H1 (cell line): ENCODE measurements at regions of chr11 and their contacts with region 1.

Region 1: DNA sequence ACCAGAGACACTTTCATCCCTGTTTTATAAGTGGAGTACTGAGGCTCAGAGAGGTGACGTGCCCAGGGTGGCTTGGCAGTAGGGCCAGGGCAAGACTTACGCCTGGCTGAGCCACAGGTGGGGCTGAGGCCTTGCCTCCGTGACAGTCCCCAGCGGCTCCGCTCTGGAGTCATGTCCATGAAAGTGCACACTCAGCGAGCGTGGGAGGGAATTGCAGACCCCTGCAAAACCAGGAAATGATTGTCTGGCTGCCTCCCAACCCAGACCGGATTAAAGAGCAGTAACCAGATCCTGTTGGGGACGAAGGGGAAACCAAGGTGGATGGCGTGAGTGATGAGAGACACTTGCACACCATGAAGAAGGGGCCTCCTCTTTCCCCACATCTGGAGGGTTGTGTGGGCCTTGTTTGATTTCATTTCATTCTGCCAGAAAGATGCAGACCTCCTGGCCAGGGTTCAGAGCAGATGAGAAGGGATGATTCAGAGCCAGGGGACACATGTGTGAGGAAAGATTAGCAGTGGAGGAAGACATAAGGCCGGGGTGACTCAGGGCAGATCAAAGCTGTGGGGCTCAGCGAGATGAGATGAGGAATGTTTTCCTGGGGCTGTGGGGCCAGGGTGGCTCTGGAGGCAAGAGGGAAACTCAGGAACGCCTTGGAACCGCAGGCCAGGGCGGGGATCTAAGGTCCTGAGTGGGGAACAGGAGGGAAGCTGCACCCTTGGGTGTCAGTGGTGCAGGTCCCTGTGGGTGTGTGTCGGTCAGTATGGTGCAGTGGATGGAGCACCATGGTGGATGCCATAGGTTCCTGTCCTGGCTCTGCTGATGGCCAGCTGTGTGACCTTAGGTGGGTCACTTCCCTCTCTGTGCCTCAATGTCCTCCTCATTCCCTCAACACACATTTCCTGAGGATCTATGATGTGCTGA is 29.9 kb upstream of the LRRC32 start:
- DNase-seq: no peak
- H3K4me3 ChIP-seq: no peak overlapping the region
- H3K27ac ChIP-seq: no peak overlapping the region
- H3K4me1 ChIP-seq: peaks cover 9 to 20% (median 16%) of the 10 kb centered on the region in 4 experiments
- H3K27me3 ChIP-seq: no peaks in the 10 kb centered on the region
- CTCF ChIP-seq: no peak
- EP300 ChIP-seq: no peak
- POLR2A ChIP-seq: no peak
- RAD21 ChIP-seq: no peak

Region 2: DNA sequence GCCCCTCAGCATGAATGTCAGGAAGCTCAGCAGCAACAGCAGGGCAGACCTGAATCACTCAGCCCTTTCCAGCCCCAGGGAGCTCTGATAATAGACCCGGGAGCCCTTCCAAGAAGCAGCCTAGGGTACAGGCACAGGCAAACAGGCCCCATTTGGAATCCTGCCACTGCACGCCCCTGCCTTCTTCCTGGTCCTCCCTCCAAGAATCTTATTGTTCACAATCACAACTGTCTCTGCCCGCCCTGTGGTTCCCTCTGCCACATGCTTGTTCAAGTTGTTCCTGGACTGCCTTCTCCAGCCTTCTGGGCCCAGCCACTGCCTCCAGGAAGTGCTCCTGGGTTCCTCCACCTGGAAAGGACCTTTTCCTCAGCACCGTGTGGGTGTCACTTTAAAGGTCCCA is 84.5 kb before region 1 on chr11:
- CTCF ChIA-PET with region 1: no interaction called
- POLR2A ChIA-PET with region 1: no interaction called
- DNase-seq: no peak
- H3K4me3 ChIP-seq: no peak overlapping the region
- H3K27ac ChIP-seq: no peak overlapping the region
- H3K4me1 ChIP-seq: peaks cover 0 to 6% (median 1%) of the 10 kb centered on the region in 4 experiments; a peak in 4 of 7 replicates
- H3K27me3 ChIP-seq: no peaks in the 10 kb centered on the region
- CTCF ChIP-seq: no peak
- EP300 ChIP-seq: no peak
- POLR2A ChIP-seq: no peak
- RAD21 ChIP-seq: no peak

Region 3: DNA sequence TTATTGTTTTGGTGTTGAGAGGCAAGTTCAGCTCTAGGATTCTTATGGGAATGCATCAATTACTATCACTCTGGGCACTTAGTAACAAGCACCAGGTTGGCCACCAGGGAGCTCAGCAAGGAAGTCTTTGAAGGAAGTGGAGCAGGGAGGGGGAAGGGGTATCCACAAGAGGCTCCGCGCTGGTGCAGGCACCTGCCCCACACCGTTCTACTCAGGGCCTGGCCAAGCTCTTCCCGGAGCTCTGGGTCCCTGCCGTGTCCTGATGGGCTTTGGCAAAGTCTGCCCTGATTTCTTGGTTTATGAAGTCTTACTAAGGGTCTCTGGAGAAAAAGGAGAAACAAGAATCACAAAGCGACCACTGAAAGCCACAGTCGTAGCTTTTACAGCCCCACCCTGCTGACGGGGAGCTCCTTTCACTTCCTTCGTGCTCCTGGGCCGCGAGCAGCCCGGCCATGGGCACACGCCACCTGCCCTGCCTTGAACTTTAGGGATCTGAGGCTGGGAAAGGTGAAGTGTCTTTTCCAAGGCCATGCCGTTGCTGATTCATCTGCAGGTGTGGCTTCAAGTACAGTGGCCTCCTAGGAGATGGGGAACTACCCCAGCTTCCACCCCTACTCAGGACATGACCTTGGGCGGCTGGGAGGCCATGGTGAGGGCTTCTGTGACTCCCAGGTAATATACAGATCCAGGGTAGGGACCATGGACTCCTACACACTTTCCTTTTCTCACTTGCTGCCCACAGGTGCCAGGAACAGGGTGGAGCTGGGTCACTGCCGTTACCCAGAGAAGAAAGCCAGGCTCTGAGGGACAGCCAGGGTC is 14.0 kb before region 1 on chr11:
- CTCF ChIA-PET with region 1: interaction called, 19 read pairs
- POLR2A ChIA-PET with region 1: no interaction called
- DNase-seq: no peak
- H3K4me3 ChIP-seq: no peak overlapping the region
- H3K27ac ChIP-seq: no peak overlapping the region
- H3K4me1 ChIP-seq: peaks cover 2 to 12% (median 10%) of the 10 kb centered on the region in 4 experiments
- H3K27me3 ChIP-seq: no peaks in the 10 kb centered on the region; a peak in 2 of 7 replicates
- CTCF ChIP-seq: peak in 1 of 3 experiments; percentile 9; a peak in 1 of 4 replicates
- EP300 ChIP-seq: no peak
- POLR2A ChIP-seq: no peak
- RAD21 ChIP-seq: no peak; a peak in 1 of 4 replicates

Region 4: GRCh38 chr11:76714499-76714898 is 14.1 kb after region 1 on chr11:
- CTCF ChIA-PET with region 1: interaction called, 39 read pairs
- POLR2A ChIA-PET with region 1: interaction called, 6 read pairs
- DNase-seq: no peak
- H3K4me3 ChIP-seq: no peak overlapping the region
- H3K27ac ChIP-seq: no peak overlapping the region
- H3K4me1 ChIP-seq: no peaks in the 10 kb centered on the region
- H3K27me3 ChIP-seq: no peaks in the 10 kb centered on the region
- CTCF ChIP-seq: peak; percentile 27 to 57 (median 39)
- EP300 ChIP-seq: no peak
- POLR2A ChIP-seq: no peak
- RAD21 ChIP-seq: peak; percentile 37 to 50